PC-3 (cell line): ENCODE measurements at regions of chr3 and their contacts with region 1.

Region 1: DNA sequence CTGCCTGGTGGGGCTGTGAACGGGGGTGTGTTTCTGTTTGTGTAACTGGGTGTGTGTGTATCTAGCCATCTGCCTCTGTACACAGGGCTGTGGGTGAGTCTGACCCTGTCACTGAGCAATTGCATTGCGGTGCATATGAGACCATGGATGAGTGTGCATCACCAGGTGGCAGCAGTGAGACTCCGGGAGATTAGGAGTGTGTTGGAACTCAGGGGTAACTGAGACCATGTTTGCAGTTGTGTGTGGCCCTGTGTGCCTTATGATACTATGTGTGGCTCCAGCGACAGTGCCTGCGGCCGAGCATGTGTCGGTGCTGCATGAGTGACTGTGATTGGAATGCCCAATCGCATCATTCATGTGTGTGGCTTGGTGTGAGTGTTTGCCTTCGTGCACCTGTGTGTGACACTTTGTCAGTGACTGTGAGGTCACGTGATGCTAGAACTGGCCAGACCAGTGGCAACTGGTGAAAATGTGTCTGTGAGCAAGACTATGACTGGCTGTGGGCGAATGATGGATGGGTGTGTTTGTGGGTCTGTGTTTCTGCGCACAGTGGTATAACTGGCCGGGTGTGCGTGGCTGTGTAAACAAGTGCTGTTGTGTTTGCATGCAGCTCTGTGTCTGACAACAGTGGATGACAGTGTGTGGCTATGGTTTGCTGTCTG is 14.0 kb downstream of the VILL start:
- DNase-seq: peak; percentile 94
- ATAC-seq: peak; percentile 80
- H3K4me3 ChIP-seq: no peak overlapping the region; the same call in 1 of the 2 replicates
- H3K27ac ChIP-seq: peak overlapping the region; percentile 80
- H3K4me1 ChIP-seq: peaks cover 27% of the 10 kb centered on the region
- H3K27me3 ChIP-seq: no peaks in the 10 kb centered on the region
- CTCF ChIP-seq: peak; percentile 94

Region 2: DNA sequence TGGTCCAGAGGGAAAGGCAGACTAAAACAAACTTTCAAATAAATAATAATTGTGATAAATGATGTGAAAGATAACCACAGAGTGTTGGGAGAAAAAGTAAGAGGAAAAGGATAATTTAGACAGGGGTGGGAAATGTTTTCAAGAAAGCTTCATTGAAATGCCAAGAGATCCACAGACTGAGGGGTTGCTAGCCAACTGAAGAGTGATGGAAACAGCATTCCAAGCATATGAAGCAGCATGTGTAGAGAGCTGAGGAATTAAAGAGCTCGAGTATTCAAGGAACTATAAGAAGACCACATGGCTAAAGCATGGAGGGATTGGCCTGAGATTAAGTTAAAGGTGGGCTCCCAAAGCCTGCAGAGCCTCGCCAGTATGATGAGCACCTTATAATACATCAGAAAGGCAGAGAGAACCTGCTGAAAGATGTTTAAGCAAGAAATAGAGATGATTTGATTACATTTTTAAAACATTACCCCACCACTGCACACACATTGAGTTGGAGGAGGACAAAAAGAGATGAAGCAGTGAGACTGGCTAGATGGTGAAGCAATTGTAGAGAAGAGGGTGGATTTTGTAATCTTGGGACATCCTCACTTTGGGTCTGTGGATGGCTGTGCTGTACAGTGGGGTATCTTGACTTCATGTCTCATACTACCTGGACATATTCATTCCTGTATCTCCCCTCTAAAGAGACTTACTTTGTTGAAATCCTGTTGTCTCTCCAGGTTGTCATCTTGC is 1523.5 kb before region 1 on chr3:
- CTCF ChIA-PET with region 1: no interaction called
- POLR2A ChIA-PET with region 1: no interaction called
- intact Hi-C with region 1: no loop called
- DNase-seq: no peak
- ATAC-seq: no peak
- H3K4me3 ChIP-seq: no peak overlapping the region
- H3K27ac ChIP-seq: no peak overlapping the region
- H3K4me1 ChIP-seq: no peaks in the 10 kb centered on the region
- H3K27me3 ChIP-seq: no peaks in the 10 kb centered on the region
- CTCF ChIP-seq: no peak

Region 3: GRCh38 chr3:37631686-37632085 is 372.9 kb before region 1 on chr3:
- CTCF ChIA-PET with region 1: no interaction called
- POLR2A ChIA-PET with region 1: no interaction called
- intact Hi-C with region 1: no loop called
- DNase-seq: no peak
- ATAC-seq: no peak
- H3K4me3 ChIP-seq: no peak overlapping the region
- H3K27ac ChIP-seq: no peak overlapping the region
- H3K4me1 ChIP-seq: no peaks in the 10 kb centered on the region
- H3K27me3 ChIP-seq: peaks cover 68% of the 10 kb centered on the region
- CTCF ChIP-seq: no peak

Region 4: DNA sequence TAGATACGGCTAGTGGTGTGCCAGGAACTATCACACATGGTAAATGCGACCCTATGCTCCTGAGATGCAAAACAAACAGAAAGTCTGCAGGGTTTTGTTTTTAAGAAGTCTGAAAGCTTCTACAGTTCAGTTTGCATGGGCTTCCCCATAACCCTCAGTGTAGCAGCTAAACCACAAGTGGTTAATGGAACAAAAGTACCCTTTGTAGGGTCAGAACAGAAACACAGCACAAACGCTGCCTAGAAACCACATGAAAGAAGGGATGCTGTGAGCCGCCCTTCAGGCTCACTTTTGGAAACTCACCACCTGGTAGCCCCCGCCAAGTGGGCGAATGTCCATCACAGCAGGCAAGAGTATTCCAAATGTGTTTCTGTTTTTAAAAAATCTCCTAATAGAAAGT is 96.6 kb before region 1 on chr3:
- CTCF ChIA-PET with region 1: no interaction called
- POLR2A ChIA-PET with region 1: no interaction called
- intact Hi-C with region 1: no loop called
- DNase-seq: no peak
- ATAC-seq: no peak
- H3K4me3 ChIP-seq: no peak overlapping the region
- H3K27ac ChIP-seq: no peak overlapping the region
- H3K4me1 ChIP-seq: no peaks in the 10 kb centered on the region
- H3K27me3 ChIP-seq: peaks cover 14% of the 10 kb centered on the region; the same call in 1 of the 2 replicates
- CTCF ChIP-seq: no peak

Region 5: DNA sequence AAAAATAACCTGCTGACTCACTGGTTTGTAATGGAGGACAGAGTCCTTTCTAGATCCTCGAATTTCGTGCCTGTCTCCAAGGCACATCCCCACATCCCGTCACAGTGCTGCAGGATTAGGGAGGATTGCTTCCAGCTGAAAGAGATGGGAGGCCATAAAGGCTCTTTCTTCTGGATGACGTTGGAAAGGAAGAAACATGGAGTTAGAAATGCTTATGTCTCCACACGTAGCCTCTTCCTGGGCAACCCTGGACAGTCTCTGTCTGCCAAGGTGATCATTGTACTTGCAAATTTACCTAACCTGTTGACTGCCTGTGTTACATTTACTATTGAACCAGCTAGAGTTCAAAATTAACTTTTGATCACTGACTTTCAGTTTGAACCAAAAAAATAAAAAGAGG is 41.5 kb before region 1 on chr3:
- CTCF ChIA-PET with region 1: no interaction called
- POLR2A ChIA-PET with region 1: no interaction called
- intact Hi-C with region 1: no loop called
- DNase-seq: no peak
- ATAC-seq: no peak
- H3K4me3 ChIP-seq: no peak overlapping the region
- H3K27ac ChIP-seq: no peak overlapping the region
- H3K4me1 ChIP-seq: no peaks in the 10 kb centered on the region
- H3K27me3 ChIP-seq: no peaks in the 10 kb centered on the region
- CTCF ChIP-seq: no peak

Region 6: GRCh38 chr3:37974121-37975083 is 30.1 kb before region 1 on chr3:
- CTCF ChIA-PET with region 1: interaction called, 11 read pairs
- POLR2A ChIA-PET with region 1: no interaction called
- intact Hi-C with region 1: loop called (anchors 1 kb)
- DNase-seq: peak; percentile 74
- ATAC-seq: peak; percentile 99
- H3K4me3 ChIP-seq: no peak overlapping the region
- H3K27ac ChIP-seq: no peak overlapping the region
- H3K4me1 ChIP-seq: no peaks in the 10 kb centered on the region
- H3K27me3 ChIP-seq: no peaks in the 10 kb centered on the region
- CTCF ChIP-seq: peak; percentile 98

Region 7: GRCh38 chr3:38117748-38118420 is 113.3 kb after region 1 on chr3:
- CTCF ChIA-PET with region 1: no interaction called
- POLR2A ChIA-PET with region 1: no interaction called
- intact Hi-C with region 1: loop called (anchors 1 kb)
- DNase-seq: peak; percentile 74
- ATAC-seq: peak; percentile 64
- H3K4me3 ChIP-seq: no peak overlapping the region
- H3K27ac ChIP-seq: no peak overlapping the region
- H3K4me1 ChIP-seq: peaks cover 6% of the 10 kb centered on the region; the same call in 1 of the 2 replicates
- H3K27me3 ChIP-seq: no peaks in the 10 kb centered on the region
- CTCF ChIP-seq: peak; percentile 87

Region 8: DNA sequence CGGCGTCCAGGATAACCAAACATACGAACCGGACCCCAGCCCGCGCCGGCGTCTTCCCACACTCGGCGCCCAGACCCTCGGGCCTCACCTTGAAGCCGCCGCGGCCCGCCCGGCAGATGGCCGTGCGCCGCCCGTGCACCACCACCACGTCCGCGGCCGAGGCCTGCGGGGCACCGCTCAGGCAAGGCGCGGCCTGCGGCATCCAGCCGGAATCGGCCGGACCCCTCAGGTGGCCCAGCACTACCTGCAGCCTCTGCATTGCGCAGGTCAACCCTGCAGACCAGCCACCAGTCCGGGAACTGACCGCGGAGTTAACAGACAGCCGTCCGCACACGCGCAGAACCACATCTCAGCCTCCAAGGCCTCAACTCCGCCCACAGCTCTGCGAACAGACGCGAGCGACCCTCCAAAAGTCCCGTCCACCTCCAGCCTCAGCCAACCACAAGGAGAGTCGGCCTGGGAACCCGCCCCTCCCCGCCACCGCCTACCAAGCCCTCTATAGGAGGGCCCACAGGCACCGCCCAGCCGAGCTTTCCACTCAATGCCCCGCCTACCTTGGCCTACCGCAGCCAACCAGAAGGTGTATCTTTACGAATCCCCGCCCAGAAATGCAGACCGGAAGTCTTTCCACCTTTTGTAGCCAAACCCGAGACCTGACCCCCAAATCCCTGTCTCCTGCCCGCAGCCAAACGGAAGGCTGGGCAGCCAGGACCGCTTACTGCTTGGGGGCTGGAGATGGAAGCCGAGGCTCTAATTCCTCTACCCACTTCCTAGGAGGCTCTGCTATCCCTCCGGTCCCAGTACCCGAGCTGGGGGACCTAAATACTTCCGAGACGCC is 132.4 kb after region 1 on chr3 and contains the start of gene ACAA1:
- CTCF ChIA-PET with region 1: no interaction called
- POLR2A ChIA-PET with region 1: no interaction called
- intact Hi-C with region 1: loop called (anchors 2 kb)
- DNase-seq: peak; percentile 99
- ATAC-seq: peak; percentile 80
- H3K4me3 ChIP-seq: peak within 1 kb of the TSS; percentile 93
- H3K27ac ChIP-seq: peak within 1 kb of the TSS; percentile 95
- H3K4me1 ChIP-seq: peaks cover 76% of the 10 kb centered on the region
- H3K27me3 ChIP-seq: no peaks in the 10 kb centered on the region
- CTCF ChIP-seq: no peak
- total RNA-seq, gene ACAA1: 76.4 and 94.5 TPM in 2 replicates

Region 9: DNA sequence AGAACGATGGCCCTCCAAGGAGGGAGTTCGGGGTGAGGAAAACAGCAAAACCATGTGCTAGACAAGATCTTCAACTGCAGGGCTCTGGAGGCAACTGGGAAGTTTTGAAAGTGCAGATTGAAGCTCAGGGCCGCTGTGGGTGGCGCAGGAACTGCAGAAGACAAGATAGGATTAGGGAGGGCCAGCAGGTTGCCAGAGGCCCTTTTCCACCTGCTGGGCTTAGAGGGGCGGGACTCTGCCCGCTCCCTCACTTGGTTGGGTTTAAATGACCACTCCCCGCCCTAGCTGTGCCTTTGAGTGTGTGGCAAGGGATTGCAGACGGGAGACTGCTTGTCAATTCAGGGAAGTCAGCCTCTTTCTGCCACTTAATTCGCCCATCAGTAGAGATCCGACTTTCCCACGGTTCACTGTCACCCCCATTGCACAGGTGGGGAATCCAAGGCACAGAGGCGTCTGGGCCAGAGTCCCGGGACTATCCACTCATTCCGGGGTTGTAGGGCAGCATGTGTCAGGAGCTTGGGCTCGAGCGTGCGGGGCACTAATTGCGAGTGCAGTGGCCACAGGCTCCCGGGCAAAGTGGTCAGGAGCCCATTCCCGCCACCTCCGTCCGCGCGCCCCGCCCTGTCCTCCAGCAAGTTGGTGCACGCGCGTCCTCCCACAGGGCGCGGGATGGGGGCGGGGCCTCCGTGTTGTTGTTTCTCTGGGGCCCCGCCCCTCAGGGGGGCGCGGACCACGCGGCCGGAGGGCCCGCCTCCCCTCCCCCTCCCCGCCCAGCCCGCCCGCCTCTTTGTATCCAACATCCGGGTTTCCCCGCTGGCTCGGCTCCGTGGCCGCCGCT is 448.7 kb after region 1 on chr3 and contains the start of gene ACVR2B:
- CTCF ChIA-PET with region 1: no interaction called
- POLR2A ChIA-PET with region 1: no interaction called
- intact Hi-C with region 1: loop called (anchors 10 kb)
- DNase-seq: peak; percentile 82
- ATAC-seq: peak; percentile 42
- H3K4me3 ChIP-seq: peak within 1 kb of the TSS; percentile 82
- H3K27ac ChIP-seq: no peak within 1 kb of the TSS
- H3K4me1 ChIP-seq: peaks cover 18% of the 10 kb centered on the region; the same call in 1 of the 2 replicates
- H3K27me3 ChIP-seq: no peaks in the 10 kb centered on the region
- CTCF ChIP-seq: no peak
- total RNA-seq, gene ACVR2B: 1.5 and 1.8 TPM in 2 replicates